Heart left ventricle (tissue), 16 donors: ENCODE measurements at regions of chr11 and their contacts with region 1.

Region 1: GRCh38 chr11:125568970-125569914 is at the start of gene EI24:
- DNase-seq: peak; percentile 92 to 96 (median 95)
- ATAC-seq: peak; percentile 100
- H3K4me3 ChIP-seq: peak within 1 kb of the TSS; percentile 84 to 100 (median 96)
- H3K27ac ChIP-seq: peak within 1 kb of the TSS; percentile 71 to 93 (median 87)
- H3K4me1 ChIP-seq: peaks cover 0 to 22% (median 10%) of the 10 kb centered on the region in 12 donors
- H3K27me3 ChIP-seq: no peaks in the 10 kb centered on the region
- CTCF ChIP-seq: peak; percentile 62 to 93 (median 75)
- POLR2A ChIP-seq: peak; percentile 22 to 88
- total RNA-seq, gene EI24: 47.7 to 72.4 (median 53.8) TPM

Region 2: GRCh38 chr11:125102510-125102909 is 466.7 kb before region 1 on chr11:
- intact Hi-C with region 1: no loop called
- DNase-seq: no peak
- ATAC-seq: no peak
- H3K4me3 ChIP-seq: no peak overlapping the region
- H3K27ac ChIP-seq: peak overlapping the region in 1 of 12 donors; percentile 73
- H3K4me1 ChIP-seq: peaks cover 0 to 12% (median 0%) of the 10 kb centered on the region in 12 donors
- H3K27me3 ChIP-seq: no peaks in the 10 kb centered on the region
- CTCF ChIP-seq: no peak
- POLR2A ChIP-seq: no peak

Region 3: DNA sequence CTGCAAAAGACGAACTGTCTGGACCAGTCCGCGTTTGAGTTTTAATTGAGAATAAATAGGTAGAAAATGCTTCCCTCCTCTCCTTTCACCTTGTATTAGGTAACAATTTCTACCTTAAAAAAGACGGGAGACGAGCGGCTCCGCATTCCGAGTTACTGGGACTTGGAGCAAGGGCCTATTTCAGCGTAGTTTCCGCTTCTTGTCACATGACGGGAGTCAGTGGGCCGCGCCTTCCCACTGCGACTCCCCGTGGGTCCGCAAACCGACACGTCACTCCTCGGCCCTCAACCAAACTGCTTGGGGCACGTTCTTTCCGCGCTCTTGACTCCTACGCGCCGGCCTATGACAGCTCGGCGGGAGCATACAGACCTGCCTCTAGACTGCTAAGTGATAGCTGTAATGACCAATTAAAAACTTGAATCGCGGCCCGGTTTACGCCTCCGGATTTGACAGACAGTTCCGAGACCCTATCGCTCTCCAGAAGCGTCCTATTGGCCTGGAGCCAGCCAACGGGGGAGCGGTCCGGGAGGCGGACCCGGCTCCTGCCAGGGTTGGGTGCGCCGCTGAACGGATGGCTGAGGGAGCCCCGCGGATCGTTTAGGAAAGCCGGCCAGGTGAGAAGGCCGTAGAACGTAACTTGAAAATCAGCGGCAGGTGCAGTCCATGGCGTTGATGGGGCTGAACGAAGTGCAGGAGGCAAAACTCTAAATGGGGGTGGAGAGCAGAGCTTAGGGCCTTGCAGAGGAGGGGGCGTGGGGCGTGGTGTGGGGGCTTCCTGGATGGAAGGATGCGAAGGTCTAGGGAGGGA is 23.3 kb after region 1 on chr11 and contains the start of gene STT3A:
- intact Hi-C with region 1: loop called in 1 of 10 experiments (anchors 1 kb)
- DNase-seq: peak; percentile 99 to 100 (median 100)
- ATAC-seq: peak; percentile 99 to 100 (median 99)
- H3K4me3 ChIP-seq: peak within 1 kb of the TSS; percentile 66 to 92 (median 82)
- H3K27ac ChIP-seq: peak within 1 kb of the TSS; percentile 85 to 98 (median 94)
- H3K4me1 ChIP-seq: peaks cover 0 to 38% (median 19%) of the 10 kb centered on the region in 12 donors
- H3K27me3 ChIP-seq: no peaks in the 10 kb centered on the region
- CTCF ChIP-seq: no peak
- POLR2A ChIP-seq: peak; percentile 53 to 92
- total RNA-seq, gene STT3A: 47.6 to 98.6 (median 59.1) TPM

Region 4: DNA sequence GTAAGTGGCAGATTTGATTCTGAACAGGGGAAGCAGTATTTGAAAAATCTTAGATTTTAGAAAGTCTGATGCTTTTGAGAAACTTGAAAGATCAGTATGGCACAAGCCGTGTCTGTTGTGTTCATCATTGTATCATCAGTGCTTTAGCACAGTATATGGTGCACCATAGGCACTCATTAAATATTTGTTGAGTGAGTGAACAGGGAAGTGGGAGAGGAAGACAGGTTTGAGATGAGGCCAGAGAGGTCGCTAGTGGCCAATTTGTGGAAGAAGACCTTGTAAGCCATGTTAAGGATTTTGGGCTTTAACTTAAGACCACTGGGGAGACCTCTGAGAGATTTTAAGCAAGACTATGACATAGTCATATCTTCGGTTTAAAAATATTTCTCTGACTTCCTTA is 68.6 kb after region 1 on chr11:
- intact Hi-C with region 1: no loop called
- DNase-seq: no peak
- ATAC-seq: no peak
- H3K4me3 ChIP-seq: no peak overlapping the region
- H3K27ac ChIP-seq: no peak overlapping the region
- H3K4me1 ChIP-seq: no peaks in the 10 kb centered on the region
- H3K27me3 ChIP-seq: no peaks in the 10 kb centered on the region
- CTCF ChIP-seq: no peak
- POLR2A ChIP-seq: no peak

Region 5: GRCh38 chr11:125957618-125958332 is 388.5 kb after region 1 on chr11:
- intact Hi-C with region 1: no loop called
- DNase-seq: no peak
- ATAC-seq: no peak
- H3K4me3 ChIP-seq: no peak overlapping the region
- H3K27ac ChIP-seq: no peak overlapping the region
- H3K4me1 ChIP-seq: peaks cover 0 to 11% (median under 1%) of the 10 kb centered on the region in 12 donors
- H3K27me3 ChIP-seq: no peaks in the 10 kb centered on the region
- CTCF ChIP-seq: no peak
- POLR2A ChIP-seq: no peak